ENCODE measurements at regions of chr2 and their contacts with region 1.

Region 1: GRCh38 chr2:206556357-206556949 is 85.8 kb upstream of the FAM237A start:
- DNase-seq: peak; percentile 26
- H3K4me3 ChIP-seq: no peak overlapping the region
- H3K27ac ChIP-seq: no peak overlapping the region
- H3K4me1 ChIP-seq: no peaks in the 10 kb centered on the region
- H3K27me3 ChIP-seq: peaks cover 3% of the 10 kb centered on the region
- CTCF ChIP-seq: peak; percentile 57 to 58

Region 2: GRCh38 chr2:206442833-206443734 is 113.4 kb before region 1 on chr2 and contains the start of gene ADAM23:
- CTCF ChIA-PET with region 1: no interaction called
- dilution Hi-C with region 1: no loop called
- in situ Hi-C with region 1: no loop called
- intact Hi-C with region 1: loop called (anchors 5 kb)
- DNase-seq: peak; percentile 50
- H3K4me3 ChIP-seq: peak within 1 kb of the TSS; percentile 34 to 51 (median 39)
- H3K27ac ChIP-seq: no peak within 1 kb of the TSS
- H3K4me1 ChIP-seq: no peaks in the 10 kb centered on the region
- H3K27me3 ChIP-seq: peaks cover 32% of the 10 kb centered on the region
- CTCF ChIP-seq: peak in 1 of 2 donors; percentile 6
- total RNA-seq, gene ADAM23: 19.0 to 30.1 TPM

Region 3: DNA sequence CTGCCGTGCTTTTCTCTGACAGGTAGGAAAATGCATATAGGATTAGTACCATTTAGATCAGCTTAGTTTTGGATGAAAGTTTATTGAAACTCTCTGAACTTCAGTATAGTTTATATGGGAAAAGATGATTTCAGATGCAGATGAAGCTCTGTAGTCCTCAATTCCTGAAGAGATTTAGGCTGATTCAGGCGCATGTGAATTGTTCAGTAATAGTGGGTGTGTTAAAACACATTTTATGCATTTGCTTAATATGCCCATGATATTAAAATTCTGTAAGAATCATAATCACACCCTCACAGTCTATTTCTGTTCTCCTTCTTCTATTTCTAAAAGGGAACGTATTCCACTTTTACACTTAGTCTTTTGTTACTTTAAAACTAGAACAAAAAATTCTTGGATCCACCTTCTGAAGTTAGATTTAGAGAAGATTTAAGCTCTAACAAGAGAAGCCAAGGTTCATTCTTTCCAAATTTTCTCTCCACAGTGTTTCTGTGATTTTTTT is 41.3 kb after region 1 on chr2:
- CTCF ChIA-PET with region 1: no interaction called
- dilution Hi-C with region 1: no loop called
- in situ Hi-C with region 1: no loop called
- intact Hi-C with region 1: no loop called
- DNase-seq: no peak
- H3K4me3 ChIP-seq: no peak overlapping the region
- H3K27ac ChIP-seq: no peak overlapping the region
- H3K4me1 ChIP-seq: no peaks in the 10 kb centered on the region
- H3K27me3 ChIP-seq: no peaks in the 10 kb centered on the region
- CTCF ChIP-seq: no peak

Region 4: GRCh38 chr2:206783718-206784117 is 227.3 kb after region 1 on chr2:
- CTCF ChIA-PET with region 1: no interaction called
- dilution Hi-C with region 1: no loop called
- in situ Hi-C with region 1: no loop called
- intact Hi-C with region 1: loop called (anchors 1 kb)
- DNase-seq: no peak
- H3K4me3 ChIP-seq: no peak overlapping the region
- H3K27ac ChIP-seq: no peak overlapping the region
- H3K4me1 ChIP-seq: no peaks in the 10 kb centered on the region
- H3K27me3 ChIP-seq: no peaks in the 10 kb centered on the region
- CTCF ChIP-seq: peak; percentile 55 to 59